Mammary epithelial cell (primary cell): ENCODE measurements at regions of chr11 and their contacts with region 1.

Region 1: GRCh38 chr11:129331871-129332274 is 43.8 kb upstream of the BARX2 start:
- DNase-seq: peak; percentile 66
- H3K4me3 ChIP-seq: no peak overlapping the region
- H3K27ac ChIP-seq: no peak overlapping the region
- H3K4me1 ChIP-seq: no peaks in the 10 kb centered on the region
- H3K27me3 ChIP-seq: no peaks in the 10 kb centered on the region
- CTCF ChIP-seq: peak; percentile 90 to 97

Region 2: GRCh38 chr11:128890543-128891368 is 441.1 kb before region 1 on chr11 and contains the start of gene KCNJ5:
- CTCF ChIA-PET with region 1: no interaction called
- dilution Hi-C with region 1: no loop called
- in situ Hi-C with region 1: loop called (anchors 5 to 10 kb)
- intact Hi-C with region 1: no loop called
- DNase-seq: peak; percentile 39
- H3K4me3 ChIP-seq: peak within 1 kb of the TSS; percentile 53 to 68 (median 61)
- H3K27ac ChIP-seq: no peak within 1 kb of the TSS
- H3K4me1 ChIP-seq: peaks cover 48% of the 10 kb centered on the region
- H3K27me3 ChIP-seq: no peaks in the 10 kb centered on the region
- CTCF ChIP-seq: peak in 1 of 2 donors; percentile 19
- total RNA-seq, gene KCNJ5: 1.2 to 63.7 TPM

Region 3: GRCh38 chr11:128956401-128957201 is 375.3 kb before region 1 on chr11:
- CTCF ChIA-PET with region 1: no interaction called
- dilution Hi-C with region 1: no loop called
- in situ Hi-C with region 1: loop called in 1 of 2 experiments (anchors 25 kb)
- intact Hi-C with region 1: loop called (anchors 2 kb)
- DNase-seq: peak; percentile 64
- H3K4me3 ChIP-seq: no peak overlapping the region
- H3K27ac ChIP-seq: no peak overlapping the region
- H3K4me1 ChIP-seq: peaks cover 6% of the 10 kb centered on the region
- H3K27me3 ChIP-seq: no peaks in the 10 kb centered on the region
- CTCF ChIP-seq: peak; percentile 65 to 73

Region 4: DNA sequence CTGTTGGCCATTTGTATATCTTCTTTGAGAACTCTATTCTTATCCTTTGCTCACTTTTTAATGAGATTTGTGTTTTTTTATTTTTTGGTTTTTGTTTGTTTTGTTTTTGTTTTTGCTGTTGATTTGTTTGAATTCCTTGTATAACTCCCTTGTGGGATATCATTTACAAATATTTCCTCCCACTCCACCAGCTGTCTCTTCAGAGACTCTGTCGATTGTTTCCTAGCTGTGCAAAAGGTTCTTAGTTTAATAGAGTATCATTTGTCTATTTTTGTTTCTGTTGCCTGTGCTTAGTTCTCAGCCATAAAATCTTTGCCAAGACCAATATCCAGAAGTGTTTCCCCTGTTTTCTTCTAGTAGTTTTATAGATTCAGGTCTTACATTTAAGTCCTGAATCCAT is 222.2 kb before region 1 on chr11:
- CTCF ChIA-PET with region 1: no interaction called
- dilution Hi-C with region 1: no loop called
- in situ Hi-C with region 1: loop called in 1 of 2 experiments (anchors 5 kb)
- intact Hi-C with region 1: no loop called
- DNase-seq: no peak
- H3K4me3 ChIP-seq: no peak overlapping the region
- H3K27ac ChIP-seq: no peak overlapping the region
- H3K4me1 ChIP-seq: no peaks in the 10 kb centered on the region
- H3K27me3 ChIP-seq: no peaks in the 10 kb centered on the region
- CTCF ChIP-seq: no peak

Region 5: GRCh38 chr11:129117595-129118350 is 214.1 kb before region 1 on chr11:
- CTCF ChIA-PET with region 1: no interaction called
- dilution Hi-C with region 1: no loop called
- in situ Hi-C with region 1: loop called (anchors 5 kb)
- intact Hi-C with region 1: loop called (anchors 1 kb)
- DNase-seq: peak; percentile 42
- H3K4me3 ChIP-seq: no peak overlapping the region
- H3K27ac ChIP-seq: no peak overlapping the region
- H3K4me1 ChIP-seq: peaks cover 10% of the 10 kb centered on the region
- H3K27me3 ChIP-seq: no peaks in the 10 kb centered on the region
- CTCF ChIP-seq: peak; percentile 93 to 94

Region 6: DNA sequence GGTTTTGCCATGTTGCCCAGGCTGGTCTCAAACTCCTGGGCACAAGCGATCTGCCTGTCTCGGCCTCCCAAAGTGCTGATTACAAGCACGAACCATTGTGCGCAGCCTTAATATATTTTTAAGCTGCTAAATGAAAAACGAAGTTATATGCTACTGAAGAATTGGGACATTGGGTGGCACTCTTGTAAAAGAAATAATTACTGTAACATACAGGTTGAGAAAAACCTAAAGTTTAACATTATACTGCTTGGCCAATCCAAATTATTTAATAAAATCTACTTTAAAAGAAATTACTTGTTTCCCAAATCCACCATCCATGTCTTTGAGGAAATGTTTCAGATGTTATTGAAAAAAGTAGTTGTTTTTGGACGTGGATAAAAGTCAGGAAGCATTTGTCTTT is 101.9 kb before region 1 on chr11:
- CTCF ChIA-PET with region 1: no interaction called
- dilution Hi-C with region 1: no loop called
- in situ Hi-C with region 1: no loop called
- intact Hi-C with region 1: loop called (anchors 2 kb)
- DNase-seq: no peak
- H3K4me3 ChIP-seq: no peak overlapping the region
- H3K27ac ChIP-seq: no peak overlapping the region
- H3K4me1 ChIP-seq: peaks cover 7% of the 10 kb centered on the region
- H3K27me3 ChIP-seq: no peaks in the 10 kb centered on the region
- CTCF ChIP-seq: no peak

Region 7: GRCh38 chr11:129279326-129280026 is 52.4 kb before region 1 on chr11:
- CTCF ChIA-PET with region 1: no interaction called
- dilution Hi-C with region 1: no loop called
- in situ Hi-C with region 1: no loop called
- intact Hi-C with region 1: loop called (anchors 2 kb)
- DNase-seq: peak; percentile 71
- H3K4me3 ChIP-seq: peak overlapping the region; percentile 68 to 73 (median 70)
- H3K27ac ChIP-seq: no peak overlapping the region
- H3K4me1 ChIP-seq: peaks cover 25% of the 10 kb centered on the region
- H3K27me3 ChIP-seq: no peaks in the 10 kb centered on the region
- CTCF ChIP-seq: no peak

Region 8: DNA sequence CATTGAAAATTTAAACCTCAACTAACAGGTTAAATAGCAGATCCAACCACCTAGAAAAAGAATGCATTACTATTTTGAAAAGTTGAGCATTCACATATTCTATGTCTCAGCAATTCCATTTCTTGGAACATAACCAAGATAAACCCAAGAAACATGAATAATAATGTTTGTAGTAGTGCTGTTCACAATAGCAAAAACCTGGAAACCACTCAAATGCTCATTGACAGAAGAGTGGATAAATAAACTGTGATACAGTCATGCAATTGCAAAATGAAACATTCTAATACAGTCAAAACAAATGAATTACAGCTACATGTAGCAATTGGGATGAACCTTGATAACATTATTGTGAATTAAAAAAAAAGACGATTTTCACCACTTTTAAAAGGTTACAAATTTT is 321.0 kb after region 1 on chr11:
- CTCF ChIA-PET with region 1: no interaction called
- dilution Hi-C with region 1: no loop called
- in situ Hi-C with region 1: no loop called
- intact Hi-C with region 1: no loop called
- DNase-seq: peak; percentile 79
- H3K4me3 ChIP-seq: no peak overlapping the region
- H3K27ac ChIP-seq: no peak overlapping the region
- H3K4me1 ChIP-seq: no peaks in the 10 kb centered on the region
- H3K27me3 ChIP-seq: no peaks in the 10 kb centered on the region
- CTCF ChIP-seq: no peak